ENCODE measurements at regions of chr14 and their contacts with region 1.

Region 1: GRCh38 chr14:24861083-24861630 is 188.8 kb downstream of the STXBP6 start:
- DNase-seq: peak; percentile 42 to 87
- H3K4me3 ChIP-seq: peak overlapping the region; percentile 46; the same call in 1 of the 2 replicates
- H3K27ac ChIP-seq: peak overlapping the region; percentile 80
- H3K4me1 ChIP-seq: peaks cover 15% of the 10 kb centered on the region
- H3K27me3 ChIP-seq: no peaks in the 10 kb centered on the region
- CTCF ChIP-seq: no peak

Region 2: DNA sequence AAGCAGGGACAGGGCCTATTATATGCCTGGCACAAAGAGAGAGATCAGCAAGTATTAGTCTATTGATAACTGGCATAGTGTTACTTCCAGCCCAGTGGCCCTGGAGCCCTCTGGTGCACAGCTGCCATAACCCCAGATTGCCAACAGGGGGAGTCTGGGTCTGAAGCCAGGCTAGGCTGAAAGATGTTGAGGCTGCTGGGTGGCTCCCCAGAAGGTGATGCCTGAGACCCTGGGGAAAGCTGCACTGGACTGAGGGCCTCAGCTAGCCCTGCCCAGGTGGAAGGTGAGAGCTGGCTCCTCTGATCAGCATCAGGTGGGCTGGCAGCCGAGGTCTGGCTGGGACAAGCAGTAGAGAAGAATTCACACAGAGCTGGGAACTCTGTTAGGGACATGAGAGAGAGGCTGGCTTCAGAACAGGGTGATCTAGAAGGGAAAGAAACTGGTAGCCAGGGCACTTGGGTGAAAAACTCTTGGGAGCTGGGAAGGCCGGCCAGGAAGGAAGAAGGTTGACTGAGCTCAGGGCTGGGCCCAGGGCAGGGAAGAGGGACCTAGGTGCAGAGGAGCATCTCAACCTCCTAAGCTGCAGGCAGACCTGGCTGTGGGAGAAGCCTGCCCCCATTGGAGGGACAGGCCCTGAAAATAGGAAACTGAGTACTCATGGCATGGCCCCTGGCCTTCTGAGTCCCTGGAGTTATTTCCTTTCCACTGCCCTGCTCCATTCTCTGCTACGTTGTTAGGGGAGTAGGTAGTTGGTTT is 255.5 kb before region 1 on chr14:
- CTCF ChIA-PET with region 1: no interaction called
- POLR2A ChIA-PET with region 1: no interaction called
- intact Hi-C with region 1: no loop called
- DNase-seq: peak in 1 of 2 experiments; percentile 10
- H3K4me3 ChIP-seq: no peak overlapping the region
- H3K27ac ChIP-seq: no peak overlapping the region
- H3K4me1 ChIP-seq: no peaks in the 10 kb centered on the region
- H3K27me3 ChIP-seq: no peaks in the 10 kb centered on the region
- CTCF ChIP-seq: peak; percentile 70

Region 3: DNA sequence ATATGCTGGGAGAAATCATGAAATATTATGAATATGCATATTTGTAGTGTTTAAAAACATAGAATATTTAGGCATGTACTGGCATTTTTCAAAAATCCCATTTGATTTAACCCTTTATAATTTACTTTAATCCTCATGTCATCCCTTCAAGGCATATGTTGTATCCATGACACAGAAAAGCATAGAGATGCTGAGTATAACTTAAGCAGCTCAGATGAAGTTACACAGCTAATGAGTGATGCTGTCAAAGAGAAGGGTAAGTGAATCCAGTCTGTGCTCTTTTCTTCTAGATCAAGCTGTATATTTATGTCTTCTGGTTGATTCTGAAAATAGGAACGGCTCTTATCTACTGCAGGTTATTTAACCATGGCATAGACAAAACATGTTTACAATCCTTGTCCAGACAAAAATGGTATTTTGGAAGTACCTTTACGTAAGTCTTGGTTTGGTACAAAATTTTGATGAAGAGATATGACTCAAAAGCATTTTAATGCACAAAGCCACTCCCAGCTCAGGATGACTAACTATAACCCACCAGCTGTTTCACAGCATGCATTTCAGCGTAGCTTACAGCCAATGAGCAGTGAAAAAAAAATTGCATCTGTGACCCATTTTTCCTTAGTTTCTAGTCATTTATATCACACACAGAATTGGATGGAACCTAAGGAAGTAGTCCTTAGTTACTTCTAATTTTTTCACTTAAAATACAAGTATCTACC is 12.9 kb before region 1 on chr14:
- CTCF ChIA-PET with region 1: no interaction called
- POLR2A ChIA-PET with region 1: interaction called, 16 read pairs
- intact Hi-C with region 1: no loop called
- DNase-seq: peak; percentile 3 to 35
- H3K4me3 ChIP-seq: no peak overlapping the region
- H3K27ac ChIP-seq: no peak overlapping the region
- H3K4me1 ChIP-seq: no peaks in the 10 kb centered on the region
- H3K27me3 ChIP-seq: no peaks in the 10 kb centered on the region
- CTCF ChIP-seq: no peak

Measured in PC-9 (cell line).